ENCODE measurements at regions of chr9 and their contacts with region 1.

Region 1: GRCh38 chr9:34048923-34049697 is 423 bp upstream of the UBAP2 start:
- DNase-seq: peak; percentile 98
- ATAC-seq: peak; percentile 84
- H3K4me3 Mint-ChIP-seq: peak overlapping the region; percentile 90
- H3K27ac Mint-ChIP-seq: peak overlapping the region; percentile 99
- H3K4me1 Mint-ChIP-seq: peaks cover 38% of the 10 kb centered on the region
- H3K27me3 Mint-ChIP-seq: no peaks in the 10 kb centered on the region

Region 2: DNA sequence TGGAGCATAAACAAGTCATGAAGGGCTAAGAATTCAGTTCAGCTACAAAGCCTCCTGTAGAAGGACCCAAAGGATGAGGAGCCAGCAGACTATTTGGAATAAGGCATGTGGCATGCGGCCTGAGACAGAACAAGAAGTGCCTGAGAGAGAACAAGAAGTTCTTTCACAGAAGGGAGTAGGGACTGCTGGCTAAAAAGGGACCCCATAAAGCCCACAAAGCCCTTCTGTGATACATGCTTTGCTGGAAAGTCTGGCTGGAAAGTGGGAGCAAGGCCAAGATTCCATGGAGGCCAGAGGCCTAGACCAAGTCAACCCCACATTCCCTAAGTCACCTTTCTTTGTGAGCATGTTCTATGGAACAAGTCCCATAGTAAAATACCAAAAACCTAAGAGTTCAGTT is 35.5 kb after region 1 on chr9:
- CTCF ChIA-PET with region 1: no interaction called
- POLR2A ChIA-PET with region 1: interaction called, 3 read pairs
- intact Hi-C with region 1: loop called in 1 of 2 experiments (anchors 5 kb)
- DNase-seq: no peak
- ATAC-seq: no peak
- H3K4me3 Mint-ChIP-seq: no peak overlapping the region
- H3K27ac Mint-ChIP-seq: peak overlapping the region; percentile 4
- H3K4me1 Mint-ChIP-seq: peaks cover 23% of the 10 kb centered on the region
- H3K27me3 Mint-ChIP-seq: no peaks in the 10 kb centered on the region

Region 3: GRCh38 chr9:34178520-34179212 is 129.6 kb after region 1 on chr9 and contains the start of gene UBAP1:
- CTCF ChIA-PET with region 1: no interaction called
- POLR2A ChIA-PET with region 1: interaction called, 10 read pairs
- intact Hi-C with region 1: loop called (anchors 1 to 2 kb)
- DNase-seq: peak; percentile 98
- ATAC-seq: peak; percentile 97
- H3K4me3 Mint-ChIP-seq: peak within 1 kb of the TSS; percentile 93
- H3K27ac Mint-ChIP-seq: peak within 1 kb of the TSS; percentile 96
- H3K4me1 Mint-ChIP-seq: peaks cover 20% of the 10 kb centered on the region
- H3K27me3 Mint-ChIP-seq: no peaks in the 10 kb centered on the region
- total RNA-seq, gene UBAP1: 29.5 to 43.3 TPM

Region 4: DNA sequence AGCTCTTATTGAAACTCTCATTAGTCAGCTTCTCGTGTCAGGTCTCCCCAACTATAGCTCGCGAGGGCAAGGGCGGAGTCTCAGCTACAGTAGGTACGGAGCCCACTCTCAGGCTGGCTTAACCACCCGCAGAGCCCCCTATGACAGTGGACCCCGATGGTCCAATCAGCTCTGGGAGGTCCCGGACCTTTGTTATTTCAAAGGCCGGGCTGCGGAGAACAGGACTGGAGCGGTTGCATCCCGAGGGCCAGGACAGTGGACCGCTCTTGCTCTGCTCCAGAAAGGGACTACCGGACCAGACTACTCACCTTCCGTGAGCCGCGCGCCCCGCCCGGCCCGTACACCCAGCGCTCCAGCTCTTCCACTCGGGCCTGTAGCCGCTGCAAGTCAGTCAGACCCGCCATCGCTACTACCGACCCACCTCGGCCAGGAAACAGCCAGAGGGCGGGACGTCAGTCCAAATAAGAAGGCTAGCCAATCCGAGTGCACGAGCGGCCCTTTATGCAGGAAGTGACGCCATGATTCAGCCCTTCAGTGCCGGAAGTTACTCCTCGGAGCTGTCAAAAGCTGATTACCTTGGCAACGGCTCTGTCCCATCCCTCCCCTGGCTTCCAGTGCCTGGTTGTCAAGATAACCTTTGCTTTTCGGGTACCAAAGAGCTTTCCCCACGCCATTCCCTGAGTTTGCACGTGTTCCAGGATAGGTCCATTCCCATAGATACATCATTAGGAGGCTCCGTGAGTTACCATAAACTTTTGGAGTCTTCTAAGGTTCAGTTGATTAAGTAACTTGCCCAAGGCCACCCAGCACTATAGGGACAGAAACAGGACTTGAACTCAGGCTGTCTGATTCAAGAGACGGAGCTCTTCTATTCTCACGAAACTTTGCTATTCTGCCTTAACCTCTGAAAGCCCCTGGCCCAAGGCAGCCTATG is 571.2 kb after region 1 on chr9 and contains the start of gene DCTN3:
- CTCF ChIA-PET with region 1: no interaction called
- POLR2A ChIA-PET with region 1: no interaction called
- intact Hi-C with region 1: loop called in 1 of 2 experiments (anchors 1 kb)
- DNase-seq: peak; percentile 95
- ATAC-seq: peak; percentile 99
- H3K4me3 Mint-ChIP-seq: peak within 1 kb of the TSS; percentile 88
- H3K27ac Mint-ChIP-seq: peak within 1 kb of the TSS; percentile 77
- H3K4me1 Mint-ChIP-seq: peaks cover 25% of the 10 kb centered on the region
- H3K27me3 Mint-ChIP-seq: peaks cover 25% of the 10 kb centered on the region
- total RNA-seq, gene DCTN3: 65.9 to 68.4 TPM